AG04449 (cell line): ENCODE measurements at regions of chr14 and their contacts with region 1.

Region 1: GRCh38 chr14:22598099-22598899 is at the start of gene ABHD4:
- DNase-seq: no peak
- H3K4me3 ChIP-seq: peak within 1 kb of the TSS; percentile 92
- CTCF ChIP-seq: no peak

Region 2: GRCh38 chr14:22614224-22614799 is 16.0 kb after region 1 on chr14:
- CTCF ChIA-PET with region 1: interaction called, 21 read pairs
- POLR2A ChIA-PET with region 1: interaction called, 6 read pairs
- DNase-seq: peak; percentile 99
- H3K4me3 ChIP-seq: no peak overlapping the region
- CTCF ChIP-seq: no peak

Region 3: DNA sequence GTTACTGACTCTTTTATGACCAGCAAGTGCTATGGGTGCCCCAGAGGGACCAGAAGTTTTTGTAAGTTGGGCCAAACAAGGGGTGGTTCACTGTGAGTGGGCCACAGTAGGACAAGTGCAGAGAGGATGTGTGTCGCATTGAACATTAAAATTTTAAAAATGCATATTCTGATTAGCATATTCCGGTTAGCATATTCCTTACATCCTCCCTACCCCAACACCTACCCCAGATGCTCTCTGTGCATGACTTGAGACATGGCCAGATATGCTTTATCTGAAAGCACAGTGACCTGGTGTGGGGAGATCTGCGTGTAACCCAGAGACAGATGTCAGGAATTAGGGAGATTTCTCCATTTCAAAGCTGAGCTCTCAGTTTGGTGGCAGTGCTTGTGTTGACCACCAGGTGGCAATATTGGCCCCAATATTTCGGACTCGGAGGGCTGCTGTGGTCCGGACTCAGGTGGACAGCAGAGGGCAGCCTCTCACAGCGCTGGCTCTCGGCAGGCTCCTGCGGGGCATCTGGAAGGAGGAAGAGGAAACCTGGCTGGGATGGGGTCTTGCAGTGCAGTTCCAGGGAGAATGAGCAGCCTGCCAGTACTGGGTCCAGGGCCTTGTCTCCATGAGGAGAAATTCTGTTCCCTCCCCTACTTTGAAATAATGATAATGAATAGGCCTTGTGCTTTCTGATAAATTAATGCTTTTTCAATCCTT is 522.4 kb after region 1 on chr14:
- CTCF ChIA-PET with region 1: no interaction called
- POLR2A ChIA-PET with region 1: no interaction called
- DNase-seq: no peak
- H3K4me3 ChIP-seq: no peak overlapping the region
- CTCF ChIP-seq: peak; percentile 99